IMR-90 (cell line): ENCODE measurements at regions of chr4 and their contacts with region 1.

Region 1: GRCh38 chr4:48360285-48361010 is 19.1 kb downstream of the SLAIN2 start:
- DNase-seq: peak; percentile 86
- ATAC-seq: peak; percentile 98
- H3K4me3 ChIP-seq: no peak overlapping the region
- H3K27ac ChIP-seq: peak overlapping the region; percentile 49
- H3K4me1 ChIP-seq: peaks cover 5% of the 10 kb centered on the region
- H3K27me3 ChIP-seq: no peaks in the 10 kb centered on the region
- CTCF ChIP-seq: no peak
- POLR2A ChIP-seq: no peak
- RAD21 ChIP-seq: no peak

Region 2: GRCh38 chr4:47852136-47852535 is 508.3 kb before region 1 on chr4:
- CTCF ChIA-PET with region 1: no interaction called
- POLR2A ChIA-PET with region 1: no interaction called
- dilution Hi-C with region 1: no loop called
- in situ Hi-C with region 1: loop called (anchors 25 kb)
- intact Hi-C with region 1: no loop called
- DNase-seq: peak; percentile 92
- ATAC-seq: peak; percentile 86
- H3K4me3 ChIP-seq: no peak overlapping the region
- H3K27ac ChIP-seq: no peak overlapping the region
- H3K4me1 ChIP-seq: no peaks in the 10 kb centered on the region
- H3K27me3 ChIP-seq: no peaks in the 10 kb centered on the region
- CTCF ChIP-seq: no peak
- POLR2A ChIP-seq: no peak
- RAD21 ChIP-seq: no peak

Region 3: DNA sequence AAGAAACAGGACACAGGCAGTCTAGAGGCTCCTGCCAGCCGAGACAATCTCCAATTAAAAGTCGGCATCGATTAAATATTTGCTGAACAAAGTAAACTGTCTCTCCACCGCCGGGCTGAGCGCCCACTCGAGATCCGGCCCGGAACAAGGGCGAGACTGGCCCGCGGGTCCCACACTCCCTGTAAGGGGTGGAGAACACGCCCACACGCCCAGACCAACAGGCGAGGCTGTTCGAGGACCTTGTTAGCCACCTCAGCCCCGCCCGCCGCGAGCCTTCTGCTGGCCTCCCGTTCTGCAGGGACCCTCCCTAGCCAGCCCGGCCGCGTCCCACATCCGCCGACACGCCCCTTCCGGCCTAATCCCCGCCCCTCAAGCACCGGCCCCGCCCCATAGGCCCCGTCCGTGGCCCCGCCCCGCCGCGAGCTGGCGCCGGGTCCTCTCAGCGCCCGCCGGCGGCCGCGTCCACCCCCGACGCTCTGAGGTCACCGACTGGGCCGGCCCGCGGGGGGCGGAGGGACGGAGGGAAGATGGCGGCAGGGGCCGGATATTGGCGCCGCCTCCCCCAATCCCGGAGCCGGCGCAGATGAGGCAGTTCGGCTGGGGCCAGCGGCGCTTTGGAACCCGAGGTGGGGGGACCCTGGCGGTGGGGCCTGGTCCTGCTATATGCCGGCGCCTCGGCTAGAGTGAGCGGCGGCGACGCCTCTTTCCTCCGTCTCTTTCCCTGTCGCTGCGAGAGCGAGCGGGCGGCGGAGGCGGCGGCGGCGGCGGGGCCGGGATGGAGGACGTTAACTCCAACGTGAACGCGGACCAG is 19.3 kb before region 1 on chr4 and contains the start of gene SLAIN2:
- CTCF ChIA-PET with region 1: no interaction called
- POLR2A ChIA-PET with region 1: interaction called, 11 read pairs
- dilution Hi-C with region 1: no loop called
- in situ Hi-C with region 1: no loop called
- intact Hi-C with region 1: no loop called
- DNase-seq: peak; percentile 97
- ATAC-seq: peak; percentile 88
- H3K4me3 ChIP-seq: peak within 1 kb of the TSS; percentile 90
- H3K27ac ChIP-seq: peak within 1 kb of the TSS; percentile 87
- H3K4me1 ChIP-seq: peaks cover 5% of the 10 kb centered on the region; the same call in 1 of the 2 replicates
- H3K27me3 ChIP-seq: no peaks in the 10 kb centered on the region
- CTCF ChIP-seq: peak; percentile 46; the same call in 1 of the 2 replicates
- POLR2A ChIP-seq: peak; percentile 96
- RAD21 ChIP-seq: peak; percentile 32; the same call in 1 of the 2 replicates
- total RNA-seq, gene SLAIN2: 23.3 and 32.2 TPM in 2 replicates

Region 4: GRCh38 chr4:48499551-48500066 is 139.2 kb after region 1 on chr4:
- CTCF ChIA-PET with region 1: no interaction called
- POLR2A ChIA-PET with region 1: interaction called, 12 read pairs
- dilution Hi-C with region 1: no loop called
- in situ Hi-C with region 1: no loop called
- intact Hi-C with region 1: no loop called
- DNase-seq: no peak
- ATAC-seq: no peak
- H3K4me3 ChIP-seq: no peak overlapping the region
- H3K27ac ChIP-seq: no peak overlapping the region
- H3K4me1 ChIP-seq: no peaks in the 10 kb centered on the region
- H3K27me3 ChIP-seq: no peaks in the 10 kb centered on the region
- CTCF ChIP-seq: no peak
- POLR2A ChIP-seq: no peak
- RAD21 ChIP-seq: no peak

Region 5: GRCh38 chr4:48518143-48518542 is 157.7 kb after region 1 on chr4:
- CTCF ChIA-PET with region 1: no interaction called
- POLR2A ChIA-PET with region 1: no interaction called
- dilution Hi-C with region 1: no loop called
- in situ Hi-C with region 1: no loop called
- intact Hi-C with region 1: no loop called
- DNase-seq: peak; percentile 46
- ATAC-seq: peak; percentile 94
- H3K4me3 ChIP-seq: no peak overlapping the region
- H3K27ac ChIP-seq: no peak overlapping the region
- H3K4me1 ChIP-seq: peaks cover 2% of the 10 kb centered on the region
- H3K27me3 ChIP-seq: no peaks in the 10 kb centered on the region
- CTCF ChIP-seq: no peak
- POLR2A ChIP-seq: no peak
- RAD21 ChIP-seq: no peak